ENCODE measurements at regions of chr10 and their contacts with region 1.

Region 1: DNA sequence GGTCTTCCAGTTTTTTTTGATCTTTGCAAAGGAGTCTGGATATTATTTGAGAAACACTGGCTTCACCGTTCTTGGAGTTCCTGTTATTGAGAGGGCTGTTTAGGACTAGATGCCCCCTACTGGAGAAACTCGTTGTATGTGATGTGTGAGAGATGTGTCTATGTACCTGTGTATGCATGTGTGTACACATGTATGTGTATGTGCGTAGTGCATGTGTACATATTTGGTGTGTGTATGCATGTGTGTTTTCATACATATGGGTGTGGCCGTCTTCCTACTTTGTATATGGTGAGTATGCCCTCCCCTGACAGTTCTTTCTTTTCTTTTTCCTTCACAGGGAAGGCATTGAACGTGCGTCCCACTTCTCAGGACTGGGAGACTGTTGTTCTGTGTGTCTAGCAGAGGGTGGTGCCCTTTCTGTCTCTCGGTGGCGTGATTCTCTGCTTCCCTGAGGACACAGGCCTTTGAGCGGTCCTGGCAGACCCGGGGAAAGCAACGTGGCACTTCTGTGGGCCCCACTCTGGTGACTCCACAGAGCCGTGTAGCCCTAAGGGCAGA is 3.0 kb upstream of the CALHM3 start:
- DNase-seq: peak; percentile 84
- CTCF ChIP-seq: peak; percentile 63

Region 2: DNA sequence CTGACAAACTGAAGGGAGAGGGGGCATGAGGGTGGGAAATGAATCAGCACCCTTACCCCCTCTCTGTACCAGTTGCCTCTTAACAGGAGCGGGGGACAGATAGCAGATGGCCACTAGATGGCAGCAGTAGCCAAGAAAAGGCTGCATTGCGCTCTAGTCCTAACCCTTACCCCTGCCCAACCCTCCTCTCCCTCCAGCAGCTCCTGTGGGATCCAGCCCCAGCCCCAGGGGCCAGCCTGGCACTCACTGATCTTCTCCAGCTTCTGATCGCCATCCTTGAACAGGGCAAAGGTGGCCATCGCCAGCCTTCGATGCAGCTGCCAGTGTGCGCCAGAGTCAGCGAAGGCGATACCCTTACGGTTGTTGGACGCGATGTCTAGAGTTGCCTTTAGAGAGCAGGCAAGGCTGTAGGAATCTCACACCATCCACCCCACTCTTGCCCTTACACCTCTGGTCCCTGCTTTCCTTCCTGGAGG is 647.0 kb before region 1 on chr10:
- in situ Hi-C with region 1: loop called (anchors 25 kb)
- DNase-seq: peak; percentile 81
- CTCF ChIP-seq: peak; percentile 91

Measured in GM13977 (cell line).